Heart left ventricle (tissue), 16 donors: ENCODE measurements at regions of chr5 and their contacts with region 1.

Region 1: DNA sequence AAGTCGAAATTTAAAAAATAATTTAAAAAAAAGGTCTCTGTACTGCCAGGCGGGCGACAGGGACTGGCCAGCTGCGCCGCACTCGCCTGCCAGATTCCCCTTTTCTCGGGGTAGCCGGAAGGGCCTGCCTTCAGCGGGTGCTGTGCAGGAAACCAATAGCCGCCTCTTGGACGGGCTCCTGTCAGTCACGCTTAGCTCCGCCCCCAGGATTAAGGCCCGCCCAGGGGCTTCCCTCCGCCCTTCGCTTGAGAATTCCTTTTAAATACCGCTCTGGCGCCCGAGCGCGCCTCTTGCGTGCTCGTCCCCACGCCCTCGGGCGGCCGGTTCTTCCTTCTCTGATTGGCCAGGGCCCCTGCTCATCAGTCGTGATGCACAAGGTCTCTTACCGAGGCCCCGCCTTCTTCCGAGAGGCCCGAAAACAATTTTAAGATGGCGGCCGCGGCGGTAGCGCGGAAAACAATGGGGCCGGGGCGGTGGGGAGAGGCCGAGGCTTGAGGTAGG is at the start of gene MAML1:
- DNase-seq: peak; percentile 100
- ATAC-seq: peak; percentile 98 to 100 (median 100)
- H3K4me3 ChIP-seq: peak within 1 kb of the TSS; percentile 53 to 95 (median 81)
- H3K27ac ChIP-seq: peak within 1 kb of the TSS; percentile 77 to 97 (median 94)
- H3K4me1 ChIP-seq: peaks cover 3 to 64% (median 38%) of the 10 kb centered on the region in 12 donors
- H3K27me3 ChIP-seq: no peaks in the 10 kb centered on the region
- CTCF ChIP-seq: no peak
- POLR2A ChIP-seq: peak in 1 of 2 donors; percentile 77
- total RNA-seq, gene MAML1: 9.5 to 18.0 (median 11.9) TPM

Region 2: GRCh38 chr5:179623003-179623880 is 109.2 kb before region 1 on chr5 and contains the start of gene HNRNPH1:
- intact Hi-C with region 1: loop called in 1 of 10 experiments (anchors 5 kb)
- DNase-seq: peak; percentile 98 to 99 (median 98)
- ATAC-seq: peak; percentile 87 to 93 (median 90)
- H3K4me3 ChIP-seq: peak within 1 kb of the TSS; percentile 66 to 100 (median 96)
- H3K27ac ChIP-seq: peak within 1 kb of the TSS; percentile 97 to 100 (median 100)
- H3K4me1 ChIP-seq: peaks cover 17 to 54% (median 46%) of the 10 kb centered on the region in 12 donors
- H3K27me3 ChIP-seq: no peaks in the 10 kb centered on the region
- CTCF ChIP-seq: peak in 4 of 12 donors; percentile 1 to 11 (median 4)
- POLR2A ChIP-seq: peak; percentile 78 to 99
- total RNA-seq, gene HNRNPH1: 106 to 252 (median 178) TPM

Region 3: DNA sequence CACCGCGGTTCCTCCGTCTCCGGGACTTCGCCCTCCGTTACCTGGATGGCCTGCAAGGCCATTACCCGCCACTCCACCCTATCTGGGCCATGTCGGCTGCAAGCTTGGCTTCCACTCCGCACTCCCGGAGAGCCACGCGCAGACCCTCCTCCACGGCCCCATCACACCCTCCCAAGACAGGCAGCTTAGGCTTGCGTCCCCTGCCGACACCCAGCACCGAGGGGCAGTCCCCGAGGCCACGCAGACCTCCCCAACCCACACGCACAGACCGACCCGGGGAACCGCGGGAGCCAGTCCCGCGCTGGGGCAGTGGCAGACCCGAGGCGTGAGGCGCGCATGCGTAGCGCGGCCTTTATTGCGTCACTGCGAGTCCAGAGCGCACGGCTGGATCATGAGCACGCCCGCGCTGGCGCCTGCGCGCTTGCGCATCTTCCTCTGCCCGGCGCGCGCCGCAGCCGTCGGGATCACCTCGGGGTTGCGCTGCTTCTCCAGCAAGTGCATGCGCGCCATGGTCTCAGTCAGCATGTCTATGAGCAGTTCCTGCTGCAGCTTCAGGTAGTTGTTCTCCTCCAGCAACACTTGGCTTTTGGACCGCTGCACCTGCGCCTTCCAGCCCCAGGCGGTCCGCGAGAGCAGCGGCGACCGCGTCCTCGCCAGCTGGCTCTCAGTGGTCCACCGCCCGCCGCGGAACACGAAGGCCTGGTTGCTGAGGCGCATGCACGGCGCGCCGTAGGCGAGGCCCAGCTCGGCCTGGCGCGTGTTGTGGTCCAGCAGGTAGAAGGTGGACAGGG is 54.0 kb before region 1 on chr5:
- intact Hi-C with region 1: loop called in 1 of 10 experiments (anchors 1 kb)
- DNase-seq: peak; percentile 96 to 99 (median 96)
- ATAC-seq: peak; percentile 96 to 99 (median 98)
- H3K4me3 ChIP-seq: peak overlapping the region; percentile 22 to 92 (median 84)
- H3K27ac ChIP-seq: peak overlapping the region; percentile 69 to 95 (median 85)
- H3K4me1 ChIP-seq: peaks cover 4 to 24% (median 18%) of the 10 kb centered on the region in 12 donors
- H3K27me3 ChIP-seq: no peaks in the 10 kb centered on the region
- CTCF ChIP-seq: peak in 1 of 12 donors; percentile 22
- POLR2A ChIP-seq: peak in 1 of 2 donors; percentile 87

Region 4: DNA sequence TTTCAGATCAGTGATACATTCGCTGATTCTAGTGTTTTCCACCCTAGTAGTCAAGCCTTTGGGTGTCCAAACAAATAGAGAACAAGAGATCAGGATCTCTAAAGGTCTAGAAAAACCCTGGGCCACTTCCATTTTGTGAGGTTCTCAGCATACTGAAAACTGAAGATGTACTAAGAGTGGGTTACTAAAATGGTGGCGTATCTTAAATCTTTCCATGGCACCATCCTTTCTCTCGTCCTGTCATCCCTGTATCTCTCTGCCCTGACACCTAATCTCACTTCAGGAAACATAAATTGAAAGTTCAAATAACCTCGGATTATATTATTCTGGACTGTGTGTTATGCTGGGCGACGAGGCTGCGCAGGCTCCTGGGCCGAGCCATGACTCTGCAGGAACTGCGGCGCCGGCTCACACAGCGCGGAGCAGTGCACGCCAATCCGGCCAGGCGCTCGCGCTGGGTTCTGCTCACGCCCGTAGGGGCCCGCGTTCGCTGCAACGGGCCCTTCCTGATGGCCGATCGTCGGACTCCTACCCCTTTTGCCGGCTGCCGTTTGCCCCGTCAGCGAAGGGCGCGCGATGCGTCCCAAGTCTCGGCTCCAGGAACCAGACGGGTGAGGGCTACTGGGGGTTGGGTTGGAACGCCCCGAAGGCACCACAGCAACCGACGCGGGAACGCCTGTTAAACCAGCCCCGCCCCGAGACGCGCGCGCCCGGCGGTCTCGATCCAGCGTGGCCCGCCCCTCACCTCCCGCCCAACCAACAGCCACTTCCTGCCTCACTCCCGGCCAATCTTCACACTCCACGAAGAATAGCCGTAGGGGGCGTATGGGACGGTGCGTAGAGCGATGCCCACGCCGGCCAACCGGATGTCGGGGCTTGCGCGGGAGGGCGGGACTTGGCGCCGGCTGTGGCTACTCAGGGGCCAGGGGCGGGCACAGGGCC is 34.2 kb before region 1 on chr5:
- intact Hi-C with region 1: loop called in 3 of 10 experiments (anchors 1 to 2 kb)
- DNase-seq: peak; percentile 99
- ATAC-seq: peak; percentile 95 to 98 (median 98)
- H3K4me3 ChIP-seq: peak overlapping the region; percentile 61 to 98 (median 90)
- H3K27ac ChIP-seq: peak overlapping the region; percentile 64 to 98 (median 97)
- H3K4me1 ChIP-seq: peaks cover 0 to 51% (median 25%) of the 10 kb centered on the region in 12 donors
- H3K27me3 ChIP-seq: no peaks in the 10 kb centered on the region
- CTCF ChIP-seq: peak in 5 of 12 donors; percentile 12 to 33 (median 15)
- POLR2A ChIP-seq: peak in 1 of 2 donors; percentile 89

Region 5: DNA sequence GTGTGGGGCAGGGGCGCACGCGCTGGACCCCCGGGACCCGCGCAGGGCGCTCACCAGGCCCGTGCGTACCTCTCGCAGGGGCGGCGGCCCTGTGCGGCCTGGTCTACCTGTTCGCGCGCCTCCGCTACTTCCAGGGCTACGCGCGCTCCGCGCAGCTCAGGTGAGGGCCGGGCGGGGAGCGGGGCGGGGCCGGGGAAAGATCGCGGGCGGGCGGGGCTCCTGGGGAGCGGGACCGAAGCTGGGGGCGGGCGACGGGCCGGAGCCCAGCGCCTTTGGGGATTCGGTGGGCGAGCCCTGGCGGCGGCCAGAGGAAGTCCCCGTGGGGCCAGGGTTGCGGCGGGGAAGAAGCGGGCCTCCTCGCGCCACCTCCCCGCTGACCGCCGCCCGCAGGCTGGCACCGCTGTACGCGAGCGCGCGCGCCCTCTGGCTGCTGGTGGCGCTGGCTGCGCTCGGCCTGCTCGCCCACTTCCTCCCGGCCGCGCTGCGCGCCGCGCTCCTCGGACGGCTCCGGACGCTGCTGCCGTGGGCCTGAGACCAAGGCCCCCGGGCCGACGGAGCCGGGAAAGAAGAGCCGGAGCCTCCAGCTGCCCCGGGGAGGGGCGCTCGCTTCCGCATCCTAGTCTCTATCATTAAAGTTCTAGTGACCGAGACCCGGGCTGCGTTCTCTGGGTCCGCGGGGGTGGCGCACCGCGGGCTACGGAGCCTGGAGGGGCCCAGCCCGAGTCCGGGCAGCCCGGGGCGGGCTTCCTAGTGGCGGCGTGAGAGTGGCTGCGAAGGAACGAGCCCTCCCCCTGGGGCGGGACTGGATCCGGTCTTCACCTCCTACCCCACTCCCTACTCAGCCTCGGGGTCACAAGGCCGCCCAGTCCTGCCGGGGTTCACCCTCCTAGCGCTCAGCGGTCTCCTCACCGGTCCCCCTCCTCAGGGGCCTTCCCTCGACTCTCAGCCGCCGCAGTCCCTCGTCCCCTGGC is 63.7 kb after region 1 on chr5:
- intact Hi-C with region 1: loop called in 1 of 10 experiments (anchors 2 kb)
- DNase-seq: peak; percentile 78 to 92 (median 85)
- ATAC-seq: peak; percentile 43 to 75 (median 66)
- H3K4me3 ChIP-seq: peak overlapping the region; percentile 46 to 82 (median 68)
- H3K27ac ChIP-seq: peak overlapping the region; percentile 63 to 95 (median 85)
- H3K4me1 ChIP-seq: peaks cover 5 to 58% (median 49%) of the 10 kb centered on the region in 12 donors
- H3K27me3 ChIP-seq: no peaks in the 10 kb centered on the region
- CTCF ChIP-seq: peak; percentile 63 to 96 (median 88)
- POLR2A ChIP-seq: peak in 1 of 2 donors; percentile 61

Region 6: GRCh38 chr5:179821581-179822432 is 89.3 kb after region 1 on chr5:
- intact Hi-C with region 1: no loop called
- DNase-seq: peak; percentile 97 to 99 (median 98)
- ATAC-seq: peak; percentile 80 to 87 (median 83)
- H3K4me3 ChIP-seq: peak overlapping the region; percentile 67 to 100 (median 99)
- H3K27ac ChIP-seq: peak overlapping the region; percentile 98 to 100 (median 99)
- H3K4me1 ChIP-seq: peaks cover 24 to 83% (median 70%) of the 10 kb centered on the region in 12 donors
- H3K27me3 ChIP-seq: no peaks in the 10 kb centered on the region
- CTCF ChIP-seq: peak in 1 of 12 donors; percentile 12
- POLR2A ChIP-seq: peak in 1 of 2 donors; percentile 89